GM12878 (cell line): ENCODE measurements at regions of chr2 and their contacts with region 1.

Region 1: DNA sequence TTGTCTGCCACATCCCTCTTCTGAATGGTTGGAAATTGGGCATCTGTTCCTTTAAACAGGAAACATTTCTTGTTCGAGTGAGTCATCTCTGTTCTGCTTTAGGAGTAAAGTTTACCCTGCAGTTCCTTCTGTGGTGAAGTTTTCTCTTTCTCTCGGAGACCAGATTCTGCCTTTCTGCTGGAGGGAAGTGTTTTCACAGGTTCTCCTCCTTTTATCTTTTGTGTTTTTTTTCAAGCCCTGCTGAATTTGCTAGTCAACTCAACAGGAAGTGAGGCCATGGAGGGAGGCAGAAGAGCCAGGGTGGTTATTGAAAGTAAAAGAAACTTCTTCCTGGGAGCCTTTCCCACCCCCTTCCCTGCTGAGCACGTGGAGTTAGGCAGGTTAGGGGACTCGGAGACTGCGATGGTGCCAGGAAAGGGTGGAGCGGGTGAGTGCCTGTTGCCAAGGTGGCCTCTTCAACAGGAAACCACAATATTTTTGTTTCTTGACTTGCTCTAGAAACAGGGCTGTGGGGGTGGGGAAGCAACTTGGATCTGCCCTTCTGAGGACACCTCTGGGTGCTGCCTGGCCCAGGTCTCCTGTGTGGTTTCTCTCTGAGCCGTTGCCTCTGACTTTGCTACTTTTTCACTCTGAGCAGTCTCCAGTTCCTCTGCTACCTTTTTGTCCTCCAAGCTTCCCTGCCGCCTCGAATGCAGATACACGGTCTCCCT is 2.2 kb upstream of the CASP8 start:
- DNase-seq: peak; percentile 79
- ATAC-seq: peak; percentile 79
- H3K4me3 ChIP-seq: peak overlapping the region; percentile 62
- H3K27ac ChIP-seq: peak overlapping the region; percentile 99
- H3K4me1 ChIP-seq: peaks cover 29% of the 10 kb centered on the region
- H3K27me3 ChIP-seq: no peaks in the 10 kb centered on the region
- CTCF ChIP-seq: 0 out of 6 replicates have a peak, but pooled peaks of 1 of the 3 experiments have one; percentile 16
- EP300 ChIP-seq: peak; percentile 64 to 97
- POLR2A ChIP-seq: peak; percentile 61
- RAD21 ChIP-seq: peak; percentile 53

Region 2: GRCh38 chr2:200871151-200871550 is 387.0 kb before region 1 on chr2:
- CTCF ChIA-PET with region 1: no interaction called
- POLR2A ChIA-PET with region 1: no interaction called
- RAD21 ChIA-PET with region 1: no interaction called
- SMC1A ChIA-PET with region 1: no interaction called
- in situ Hi-C with region 1: no loop called
- intact Hi-C with region 1: no loop called
- DNase-seq: no peak
- ATAC-seq: no peak
- H3K4me3 ChIP-seq: no peak overlapping the region
- H3K27ac ChIP-seq: no peak overlapping the region
- H3K4me1 ChIP-seq: no peaks in the 10 kb centered on the region
- H3K27me3 ChIP-seq: no peaks in the 10 kb centered on the region
- CTCF ChIP-seq: no peak
- EP300 ChIP-seq: no peak
- POLR2A ChIP-seq: no peak
- RAD21 ChIP-seq: no peak

Region 3: GRCh38 chr2:201237486-201238123 is 20.5 kb before region 1 on chr2:
- CTCF ChIA-PET with region 1: interaction called, 85 read pairs
- POLR2A ChIA-PET with region 1: interaction called, 33 read pairs
- RAD21 ChIA-PET with region 1: interaction called, 79 read pairs
- SMC1A ChIA-PET with region 1: interaction called, 87 read pairs
- in situ Hi-C with region 1: no loop called
- intact Hi-C with region 1: loop called (anchors 1 kb)
- DNase-seq: no peak
- ATAC-seq: no peak
- H3K4me3 ChIP-seq: no peak overlapping the region
- H3K27ac ChIP-seq: no peak overlapping the region
- H3K4me1 ChIP-seq: peaks cover 3% of the 10 kb centered on the region
- H3K27me3 ChIP-seq: no peaks in the 10 kb centered on the region
- CTCF ChIP-seq: no peak
- EP300 ChIP-seq: no peak
- POLR2A ChIP-seq: no peak
- RAD21 ChIP-seq: no peak

Region 4: DNA sequence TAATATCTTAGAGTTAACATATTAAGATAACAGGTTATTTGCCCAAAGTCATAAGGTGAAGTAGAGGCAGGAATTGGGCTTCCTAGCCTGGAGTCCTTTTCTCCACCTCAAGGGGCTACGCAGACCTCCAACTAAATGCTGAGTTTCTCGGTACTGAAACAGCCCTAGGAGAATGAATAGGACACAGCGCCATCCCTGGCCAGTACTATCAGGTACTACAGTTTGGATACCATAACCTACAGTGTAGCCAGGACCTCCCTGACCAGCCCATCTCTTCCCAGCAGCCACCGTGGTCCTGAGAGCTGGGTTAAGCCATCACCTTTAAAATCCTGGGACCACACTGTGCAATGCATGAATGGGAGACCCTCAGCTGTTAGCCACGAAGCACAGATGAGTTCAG is 17.9 kb after region 1 on chr2:
- CTCF ChIA-PET with region 1: interaction called, 3 read pairs
- POLR2A ChIA-PET with region 1: no interaction called
- RAD21 ChIA-PET with region 1: no interaction called
- SMC1A ChIA-PET with region 1: interaction called, 10 read pairs
- in situ Hi-C with region 1: no loop called
- intact Hi-C with region 1: no loop called
- DNase-seq: no peak
- ATAC-seq: peak; percentile 39; the same call in 2 of the 3 replicates
- H3K4me3 ChIP-seq: no peak overlapping the region
- H3K27ac ChIP-seq: no peak overlapping the region
- H3K4me1 ChIP-seq: no peaks in the 10 kb centered on the region
- H3K27me3 ChIP-seq: no peaks in the 10 kb centered on the region
- CTCF ChIP-seq: peak in 2 of 3 experiments; percentile 1 to 5; a peak in 1 of 6 replicates
- EP300 ChIP-seq: no peak
- POLR2A ChIP-seq: no peak
- RAD21 ChIP-seq: no peak

Region 5: DNA sequence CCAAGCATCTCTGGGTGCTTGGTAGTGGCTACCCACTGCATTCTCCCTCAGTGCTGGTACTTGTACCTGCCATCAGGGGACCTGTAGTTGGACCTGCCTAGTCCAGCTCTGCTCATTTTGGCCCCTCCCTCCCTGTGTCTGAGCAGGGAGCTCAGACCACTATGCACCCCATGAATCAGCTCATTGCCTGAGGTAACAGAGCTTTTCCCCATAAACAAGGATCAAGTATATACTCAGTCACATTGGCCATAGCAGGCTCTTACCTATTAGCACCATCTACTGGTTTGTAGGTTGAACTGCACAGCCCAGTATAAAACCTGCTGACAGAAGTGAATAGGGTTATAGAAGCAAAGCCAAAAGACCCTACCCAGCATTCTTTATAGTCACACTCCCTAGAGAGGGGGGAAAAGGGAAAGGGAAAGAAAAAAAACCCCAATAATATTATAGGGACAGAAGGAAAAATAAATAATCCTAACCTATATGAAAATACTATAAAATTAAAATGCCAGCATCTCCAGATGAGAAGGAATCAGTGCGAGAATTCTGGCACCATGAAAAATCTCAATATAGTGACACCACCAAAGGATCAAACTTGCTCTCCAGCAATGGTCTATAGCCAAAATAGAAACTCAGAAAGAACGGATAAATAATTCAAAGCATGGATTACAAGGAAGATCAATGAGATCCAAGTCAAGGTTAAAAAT is 105.9 kb after region 1 on chr2:
- CTCF ChIA-PET with region 1: interaction called, 32 read pairs
- POLR2A ChIA-PET with region 1: no interaction called
- RAD21 ChIA-PET with region 1: interaction called, 4 read pairs
- SMC1A ChIA-PET with region 1: interaction called, 16 read pairs
- in situ Hi-C with region 1: no loop called
- intact Hi-C with region 1: no loop called
- DNase-seq: peak; percentile 30
- ATAC-seq: peak; percentile 94
- H3K4me3 ChIP-seq: no peak overlapping the region
- H3K27ac ChIP-seq: no peak overlapping the region
- H3K4me1 ChIP-seq: no peaks in the 10 kb centered on the region
- H3K27me3 ChIP-seq: no peaks in the 10 kb centered on the region
- CTCF ChIP-seq: peak; percentile 83 to 86 (median 86)
- EP300 ChIP-seq: no peak
- POLR2A ChIP-seq: no peak
- RAD21 ChIP-seq: peak; percentile 97

Region 6: DNA sequence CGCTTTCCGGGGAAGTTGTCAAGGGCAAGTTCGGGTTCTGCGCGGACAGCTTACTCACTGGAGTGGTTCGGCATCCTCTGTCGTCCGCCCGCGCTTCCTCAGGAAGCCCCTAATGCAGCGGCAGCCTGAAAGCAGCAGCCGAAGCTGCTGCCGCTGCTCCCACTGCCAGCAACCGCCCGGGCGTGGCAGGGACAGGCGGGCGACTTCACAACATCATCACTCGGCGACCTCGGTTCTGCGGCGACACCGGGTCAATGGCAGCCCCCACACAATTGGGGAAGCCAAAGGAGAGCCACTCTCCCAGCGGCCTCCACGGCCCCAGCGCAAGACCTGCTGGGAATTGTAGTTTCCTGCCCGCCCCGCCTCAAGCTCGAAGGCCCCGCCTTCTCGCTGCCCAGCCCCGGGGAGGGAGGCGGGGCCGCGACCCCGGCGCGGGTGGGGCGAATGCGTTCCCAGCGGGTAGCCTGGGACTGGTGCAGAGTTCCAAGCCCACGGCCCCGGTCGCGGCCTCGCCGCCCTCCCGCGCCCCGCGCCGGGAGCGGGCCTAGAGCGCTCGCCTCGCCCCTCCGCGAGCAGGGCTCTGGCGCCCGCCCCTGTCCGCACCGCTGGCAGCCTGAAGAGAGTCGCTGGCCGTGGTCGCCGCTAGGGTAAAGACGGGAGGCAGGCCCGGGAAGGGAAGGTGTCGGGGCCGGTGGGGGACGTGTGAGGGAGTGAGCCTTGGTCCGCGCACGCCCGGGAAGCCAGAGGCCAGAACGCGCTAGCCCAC is 193.4 kb after region 1 on chr2 and contains the starts of genes STRADB and TRAK2:
- CTCF ChIA-PET with region 1: no interaction called
- POLR2A ChIA-PET with region 1: interaction called, 6 read pairs
- RAD21 ChIA-PET with region 1: no interaction called
- SMC1A ChIA-PET with region 1: interaction called, 4 read pairs
- in situ Hi-C with region 1: no loop called
- intact Hi-C with region 1: loop called (anchors 5 kb)
- DNase-seq: peak; percentile 80
- ATAC-seq: peak; percentile 97
- H3K4me3 ChIP-seq: peak within 1 kb of the TSS; percentile 96
- H3K27ac ChIP-seq: peak within 1 kb of the TSS; percentile 85
- H3K4me1 ChIP-seq: peaks cover 22% of the 10 kb centered on the region
- H3K27me3 ChIP-seq: no peaks in the 10 kb centered on the region
- CTCF ChIP-seq: peak in 1 of 3 experiments; percentile 31; a peak in 2 of 6 replicates
- EP300 ChIP-seq: 0 out of 4 replicates have a peak, but pooled peaks of 1 of the 2 experiments have one; percentile 40
- POLR2A ChIP-seq: peak; percentile 95
- RAD21 ChIP-seq: 0 out of 2 replicates have a peak, but pooled peaks have one; percentile 3
- polyA plus RNA-seq, gene STRADB: 12.1 to 15.4 TPM
- polyA plus RNA-seq, gene TRAK2: 5.2 to 5.5 TPM

Region 7: DNA sequence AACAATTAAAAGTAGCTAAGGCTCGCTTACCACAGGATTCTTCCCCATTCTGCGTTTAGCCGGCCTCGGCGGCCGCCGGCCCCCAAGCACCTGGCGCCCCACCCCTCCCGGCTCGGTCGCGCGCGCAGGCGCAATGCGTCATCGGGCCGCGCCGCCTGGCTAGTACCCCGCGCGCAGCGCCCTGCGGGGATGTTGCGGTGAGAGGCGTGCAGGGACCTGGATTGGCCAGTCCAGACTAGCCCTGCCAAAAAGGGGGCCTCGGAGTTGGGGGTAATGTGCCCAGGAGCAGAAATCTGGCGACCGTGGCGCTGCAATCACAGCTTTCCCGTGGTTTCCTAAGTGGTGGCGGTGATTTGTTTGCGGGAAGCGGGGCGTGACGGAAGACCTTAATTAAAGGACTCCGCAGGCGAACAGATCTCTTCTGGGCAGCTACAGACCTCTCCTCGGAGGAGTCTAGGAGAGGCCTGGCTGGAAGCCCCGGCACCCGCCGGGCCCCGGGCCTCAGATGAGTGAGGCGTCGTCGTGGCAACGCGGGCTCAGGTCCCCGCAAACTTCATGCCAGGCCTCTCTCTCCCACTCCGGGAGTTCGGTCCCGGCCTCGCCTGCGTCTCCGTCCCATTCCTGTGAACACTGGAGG is 384.6 kb after region 1 on chr2:
- CTCF ChIA-PET with region 1: no interaction called
- POLR2A ChIA-PET with region 1: no interaction called
- RAD21 ChIA-PET with region 1: no interaction called
- SMC1A ChIA-PET with region 1: no interaction called
- in situ Hi-C with region 1: no loop called
- intact Hi-C with region 1: loop called (anchors 10 kb)
- DNase-seq: peak; percentile 1
- ATAC-seq: peak; percentile 93
- H3K4me3 ChIP-seq: peak overlapping the region; percentile 94
- H3K27ac ChIP-seq: peak overlapping the region; percentile 85
- H3K4me1 ChIP-seq: no peaks in the 10 kb centered on the region
- H3K27me3 ChIP-seq: no peaks in the 10 kb centered on the region
- CTCF ChIP-seq: no peak
- EP300 ChIP-seq: 0 out of 4 replicates have a peak, but pooled peaks of 1 of the 2 experiments have one; percentile 17
- POLR2A ChIP-seq: peak; percentile 89
- RAD21 ChIP-seq: no peak